ENCODE measurements at regions of chr9 and their contacts with region 1.

Region 1: DNA sequence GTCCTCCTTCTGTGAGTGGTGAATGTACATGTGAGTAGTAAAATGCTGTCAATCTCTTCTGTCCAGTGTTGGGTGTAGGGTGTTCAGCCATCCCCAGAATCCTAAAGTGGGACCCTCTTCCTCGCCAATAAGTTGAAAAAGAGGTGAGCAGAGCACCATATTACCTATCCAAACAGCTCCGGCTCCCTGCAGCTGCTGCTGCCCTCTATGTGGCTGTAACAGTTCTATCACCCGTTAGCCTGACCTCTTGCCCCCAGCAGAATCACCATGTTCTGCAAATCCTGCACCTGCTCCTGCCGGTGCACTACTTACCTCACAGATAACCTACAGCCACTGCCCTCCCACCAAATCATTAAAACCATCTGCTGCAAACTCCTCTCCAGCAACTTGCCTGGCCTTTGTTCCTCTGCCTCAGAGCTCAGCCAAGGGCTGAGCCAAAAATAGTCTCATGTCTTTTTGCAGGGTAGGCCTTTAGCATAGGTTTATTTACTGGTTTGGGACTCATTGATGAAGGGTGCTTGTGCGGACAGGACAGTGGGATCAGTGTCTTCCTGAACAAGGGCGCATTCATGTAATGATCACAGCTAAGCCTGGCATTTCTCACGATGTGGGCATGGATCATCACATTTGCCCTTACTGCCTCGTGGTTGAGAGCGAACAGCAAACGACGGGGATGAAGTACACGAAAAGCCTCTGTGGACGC is 49.6 kb upstream of the CCL21 start:
- DNase-seq: no peak
- ATAC-seq: no peak
- H3K4me3 ChIP-seq: no peak overlapping the region
- H3K27ac ChIP-seq: no peak overlapping the region
- H3K4me1 ChIP-seq: no peaks in the 10 kb centered on the region
- H3K27me3 ChIP-seq: no peaks in the 10 kb centered on the region
- CTCF ChIP-seq: no peak

Region 2: DNA sequence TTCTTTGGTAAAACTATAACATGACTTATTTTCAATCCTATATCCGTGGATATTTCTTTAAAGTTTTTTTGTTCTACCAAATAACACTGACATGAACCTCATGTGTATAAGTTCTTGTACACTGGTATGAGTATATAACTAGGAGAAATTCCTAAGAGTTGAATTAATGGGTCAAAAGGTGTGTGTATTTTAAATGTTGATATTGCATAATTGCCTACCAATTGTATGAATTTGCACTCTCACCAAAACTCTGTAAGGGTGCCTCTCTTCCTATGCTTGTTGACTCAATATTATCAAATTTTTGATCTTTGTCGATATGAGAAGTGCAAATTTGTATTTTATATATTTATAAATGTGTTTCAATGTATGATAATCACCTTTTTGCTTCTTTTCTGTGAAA is 26.7 kb before region 1 on chr9:
- CTCF ChIA-PET with region 1: interaction called, 10 read pairs
- POLR2A ChIA-PET with region 1: no interaction called
- in situ Hi-C with region 1: no loop called
- intact Hi-C with region 1: no loop called
- DNase-seq: no peak
- ATAC-seq: no peak
- H3K4me3 ChIP-seq: no peak overlapping the region
- H3K27ac ChIP-seq: no peak overlapping the region
- H3K4me1 ChIP-seq: no peaks in the 10 kb centered on the region
- H3K27me3 ChIP-seq: no peaks in the 10 kb centered on the region; the same call in 1 of the 2 replicates
- CTCF ChIP-seq: no peak

Region 3: DNA sequence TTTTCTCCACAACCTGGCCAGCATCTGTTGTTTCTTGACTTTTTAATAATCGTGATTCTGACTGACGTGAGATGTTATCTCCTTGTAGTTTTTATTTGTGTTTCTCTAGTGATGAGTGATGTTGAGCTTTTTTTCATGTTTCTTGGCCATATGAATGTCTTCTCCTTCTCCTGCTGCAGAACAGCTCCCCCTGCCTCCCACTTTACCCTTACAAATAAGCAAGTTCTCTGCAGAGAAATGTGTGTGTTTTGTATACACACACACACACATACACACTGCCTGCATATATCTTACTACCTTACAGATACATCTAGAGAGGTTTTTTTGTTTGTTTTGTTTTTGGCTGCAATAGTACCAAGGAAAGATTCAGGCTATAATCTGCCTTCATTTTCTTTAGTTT is 109.8 kb after region 1 on chr9:
- CTCF ChIA-PET with region 1: interaction called, 11 read pairs
- POLR2A ChIA-PET with region 1: no interaction called
- in situ Hi-C with region 1: no loop called
- intact Hi-C with region 1: loop called (anchors 2 kb)
- DNase-seq: no peak
- ATAC-seq: no peak
- H3K4me3 ChIP-seq: no peak overlapping the region
- H3K27ac ChIP-seq: no peak overlapping the region
- H3K4me1 ChIP-seq: no peaks in the 10 kb centered on the region
- H3K27me3 ChIP-seq: peaks cover 14% of the 10 kb centered on the region
- CTCF ChIP-seq: peak; percentile 36; the same call in 1 of the 2 replicates

Region 4: DNA sequence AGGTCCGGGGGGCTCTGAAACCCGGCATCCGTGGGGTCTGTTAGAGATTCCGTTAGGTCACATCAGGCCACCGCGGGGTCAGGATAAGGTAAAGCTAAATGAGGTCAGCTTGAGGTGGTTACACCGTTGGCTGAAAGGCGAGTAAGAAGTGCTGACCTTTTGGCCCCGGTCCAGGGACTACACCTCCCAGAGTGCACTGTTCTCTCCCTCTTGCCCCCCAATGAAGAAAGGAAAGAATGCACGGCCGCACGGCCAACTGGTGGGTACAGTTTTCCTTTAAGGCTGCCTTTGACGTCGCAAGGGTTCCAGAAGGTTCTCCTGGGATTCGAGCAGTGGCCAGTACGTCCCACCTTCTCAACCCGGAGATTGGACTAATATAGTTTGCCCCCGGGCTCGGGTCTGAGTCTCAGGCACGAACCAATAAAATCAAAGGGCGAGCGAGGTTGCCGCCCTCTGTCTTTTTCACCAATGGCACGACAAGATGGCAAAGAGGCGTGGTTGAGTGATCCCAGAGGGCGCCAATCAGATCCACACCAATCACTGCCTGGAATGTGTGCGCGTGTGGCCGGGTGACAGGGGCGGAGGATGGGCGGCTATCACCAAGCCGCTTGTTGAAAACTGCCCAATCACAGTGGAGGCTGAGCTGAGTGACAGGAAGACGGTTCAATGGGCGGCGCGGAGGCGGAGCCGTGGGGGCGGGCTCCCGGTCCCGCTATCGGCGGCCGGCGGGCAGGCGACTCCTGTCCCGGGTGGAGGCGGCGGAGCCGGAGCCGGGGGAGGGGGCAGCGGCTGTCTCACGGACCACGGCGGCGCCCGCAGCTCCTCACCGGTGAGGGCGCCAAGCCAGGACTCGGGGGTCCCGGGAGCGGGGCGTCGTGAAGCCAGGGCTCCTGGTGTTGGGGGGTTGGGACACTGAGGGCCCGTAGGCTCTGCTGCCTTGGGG is 229.7 kb after region 1 on chr9 and contains the start of gene DNAJB5:
- CTCF ChIA-PET with region 1: interaction called, 7 read pairs
- POLR2A ChIA-PET with region 1: no interaction called
- in situ Hi-C with region 1: no loop called
- intact Hi-C with region 1: loop called (anchors 5 kb)
- DNase-seq: peak; percentile 95
- ATAC-seq: peak; percentile 94
- H3K4me3 ChIP-seq: peak within 1 kb of the TSS; percentile 76 to 78
- H3K27ac ChIP-seq: peak within 1 kb of the TSS; percentile 84
- H3K4me1 ChIP-seq: peaks cover 33% of the 10 kb centered on the region
- H3K27me3 ChIP-seq: no peaks in the 10 kb centered on the region
- CTCF ChIP-seq: no peak
- total RNA-seq, gene DNAJB5: 9.7 TPM

Measured in Panc1 (cell line).